GM10248 (cell line): ENCODE measurements at regions of chr2 and their contacts with region 1.

Region 1: GRCh38 chr2:17719562-17720371 is 33.8 kb downstream of the SMC6 start:
- DNase-seq: peak; percentile 28
- CTCF ChIP-seq: peak; percentile 50

Region 2: GRCh38 chr2:17646081-17646554 is 73.6 kb before region 1 on chr2:
- CTCF ChIA-PET with region 1: interaction called, 12 read pairs
- POLR2A ChIA-PET with region 1: no interaction called
- DNase-seq: peak; percentile 66
- CTCF ChIP-seq: peak; percentile 85

Region 3: DNA sequence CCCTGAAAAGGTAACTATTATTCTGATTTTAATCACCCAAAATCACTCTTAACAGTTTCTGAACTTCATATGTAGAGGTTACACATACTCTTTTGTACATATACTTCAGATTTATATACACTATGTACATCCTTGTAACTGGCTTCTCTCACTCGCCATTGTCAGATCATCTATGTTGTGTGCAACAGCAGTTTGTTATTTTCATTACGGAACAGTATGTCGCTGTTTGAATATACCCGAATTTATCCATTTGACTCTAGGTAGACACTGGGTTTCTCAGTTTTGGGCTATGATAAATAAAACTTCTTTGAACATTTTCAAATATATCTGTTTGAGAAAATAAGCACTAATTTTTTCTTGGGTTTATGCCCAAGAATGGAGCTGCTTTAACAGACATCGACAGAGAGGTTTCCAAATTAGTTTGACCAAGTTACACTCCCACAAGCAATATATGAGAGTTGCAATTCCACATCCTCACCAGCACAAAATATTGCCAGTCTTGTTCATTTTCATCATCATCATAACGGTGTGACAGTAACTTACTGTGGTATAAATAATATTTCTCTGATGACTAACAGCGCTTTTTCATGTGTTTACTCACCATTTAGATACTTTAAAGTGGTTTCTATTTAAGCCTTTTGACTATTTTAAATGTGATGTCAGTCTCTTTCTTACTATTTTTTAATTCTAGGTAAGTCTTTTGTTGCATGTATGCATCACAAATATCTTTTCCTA is 47.0 kb before region 1 on chr2:
- CTCF ChIA-PET with region 1: interaction called, 11 read pairs
- POLR2A ChIA-PET with region 1: no interaction called
- DNase-seq: no peak
- CTCF ChIP-seq: no peak

Region 4: GRCh38 chr2:17729880-17730279 is 10.1 kb after region 1 on chr2:
- CTCF ChIA-PET with region 1: interaction called, 50 read pairs
- POLR2A ChIA-PET with region 1: no interaction called
- DNase-seq: no peak
- CTCF ChIP-seq: no peak

Region 5: GRCh38 chr2:17736989-17737388 is 17.2 kb after region 1 on chr2:
- CTCF ChIA-PET with region 1: interaction called, 50 read pairs
- POLR2A ChIA-PET with region 1: no interaction called
- DNase-seq: no peak
- CTCF ChIP-seq: no peak

Region 6: DNA sequence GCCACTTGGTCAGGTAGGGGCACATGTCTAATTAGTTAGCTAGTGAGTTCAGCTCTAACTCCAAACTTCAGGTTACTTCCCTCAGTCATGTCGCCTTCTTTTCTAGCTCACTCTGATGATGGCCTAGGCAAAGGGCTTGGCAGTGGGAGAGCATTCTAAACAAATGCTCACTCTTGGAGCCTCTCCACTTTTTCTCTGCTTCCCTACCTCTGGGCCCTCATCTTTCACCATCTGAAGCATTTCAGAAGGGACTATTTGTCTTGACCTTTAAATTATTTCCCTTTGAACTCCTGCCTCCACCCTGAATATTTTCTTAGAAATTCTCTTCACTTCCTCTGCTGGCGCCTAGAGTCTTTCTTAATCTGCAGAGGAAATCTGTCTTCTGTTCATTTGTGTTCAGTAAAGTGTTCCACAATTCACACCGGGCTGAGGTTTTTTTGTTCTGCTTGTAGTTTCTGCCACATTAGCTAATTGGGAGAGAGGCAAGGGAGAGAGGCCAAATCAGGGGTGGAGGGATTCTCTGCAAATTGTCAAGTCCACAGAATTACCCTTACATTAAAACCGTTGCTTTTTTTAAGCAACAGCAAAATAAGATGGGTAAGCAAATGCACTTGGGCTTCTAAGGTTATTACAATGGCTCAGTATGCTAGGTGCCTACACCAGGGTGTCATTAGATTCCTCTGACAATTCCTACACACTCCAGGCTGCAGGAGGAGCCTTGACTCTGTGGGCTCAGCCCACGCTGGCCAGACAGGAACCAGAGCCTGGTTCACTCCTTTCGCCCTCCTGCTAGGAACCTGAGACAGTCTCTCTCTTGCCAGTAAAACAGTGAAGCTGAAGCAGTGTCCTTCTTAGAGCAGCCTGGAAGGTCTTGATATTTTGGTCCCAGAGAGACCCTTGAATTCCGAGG is 102.0 kb after region 1 on chr2:
- CTCF ChIA-PET with region 1: interaction called, 11 read pairs
- POLR2A ChIA-PET with region 1: no interaction called
- DNase-seq: no peak
- CTCF ChIP-seq: no peak